Endothelial cell of umbilical vein (primary cell): ENCODE measurements at regions of chr17 and their contacts with region 1.

Region 1: DNA sequence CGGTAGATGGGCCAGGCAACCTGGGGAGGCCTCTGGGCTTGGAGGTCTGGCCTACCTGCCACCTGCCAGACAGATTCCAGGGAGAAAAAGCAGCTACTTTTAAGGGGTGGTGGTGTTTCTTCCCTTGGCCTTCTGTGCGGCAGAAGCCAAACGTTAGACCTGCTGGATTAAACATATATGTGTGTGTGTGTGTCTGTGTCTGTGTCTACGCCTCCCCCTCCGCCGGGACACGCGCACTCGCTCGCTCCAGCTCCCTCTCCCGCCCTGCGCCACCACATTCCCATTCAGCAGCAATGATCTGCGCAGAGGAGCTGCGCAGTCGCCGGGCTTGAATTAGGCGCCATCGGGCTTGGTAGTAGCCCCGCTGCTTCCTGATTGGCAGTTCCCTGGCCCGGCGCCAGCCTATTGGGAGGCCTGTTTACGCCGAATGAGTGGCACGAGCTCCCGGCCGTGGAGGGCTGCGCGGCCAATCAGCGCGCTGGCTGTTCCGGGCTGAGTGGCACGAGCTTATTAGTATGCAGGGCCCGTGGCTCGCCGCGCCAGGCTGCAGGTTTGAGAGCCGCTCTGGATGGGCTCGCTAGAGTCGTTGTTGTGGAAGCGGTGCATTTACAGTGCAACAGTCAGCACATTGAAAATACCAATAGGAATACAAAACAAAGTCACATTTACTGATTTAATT is at the start of gene BAHCC1:
- DNase-seq: peak; percentile 100
- H3K4me3 ChIP-seq: peak within 1 kb of the TSS; percentile 60 to 77 (median 76)
- H3K27ac ChIP-seq: peak within 1 kb of the TSS; percentile 85
- H3K4me1 ChIP-seq: peaks cover 33% of the 10 kb centered on the region
- H3K27me3 ChIP-seq: no peaks in the 10 kb centered on the region
- CTCF ChIP-seq: no peak
- POLR2A ChIP-seq: peak; percentile 97
- total RNA-seq, gene BAHCC1: 10.3 and 11.6 TPM in 2 replicates

Region 2: GRCh38 chr17:81294856-81295680 is 100.0 kb before region 1 on chr17 and contains the start of gene SLC38A10:
- CTCF ChIA-PET with region 1: interaction called, 7 read pairs
- POLR2A ChIA-PET with region 1: interaction called, 3 read pairs
- dilution Hi-C with region 1: no loop called
- intact Hi-C with region 1: loop called (anchors 1 kb)
- DNase-seq: peak; percentile 79
- H3K4me3 ChIP-seq: peak within 1 kb of the TSS; percentile 57 to 72 (median 63)
- H3K27ac ChIP-seq: peak within 1 kb of the TSS; percentile 86
- H3K4me1 ChIP-seq: peaks cover 14% of the 10 kb centered on the region
- H3K27me3 ChIP-seq: no peaks in the 10 kb centered on the region
- CTCF ChIP-seq: no peak
- POLR2A ChIP-seq: peak; percentile 91
- total RNA-seq, gene SLC38A10: 109 and 113 TPM in 2 replicates

Region 3: DNA sequence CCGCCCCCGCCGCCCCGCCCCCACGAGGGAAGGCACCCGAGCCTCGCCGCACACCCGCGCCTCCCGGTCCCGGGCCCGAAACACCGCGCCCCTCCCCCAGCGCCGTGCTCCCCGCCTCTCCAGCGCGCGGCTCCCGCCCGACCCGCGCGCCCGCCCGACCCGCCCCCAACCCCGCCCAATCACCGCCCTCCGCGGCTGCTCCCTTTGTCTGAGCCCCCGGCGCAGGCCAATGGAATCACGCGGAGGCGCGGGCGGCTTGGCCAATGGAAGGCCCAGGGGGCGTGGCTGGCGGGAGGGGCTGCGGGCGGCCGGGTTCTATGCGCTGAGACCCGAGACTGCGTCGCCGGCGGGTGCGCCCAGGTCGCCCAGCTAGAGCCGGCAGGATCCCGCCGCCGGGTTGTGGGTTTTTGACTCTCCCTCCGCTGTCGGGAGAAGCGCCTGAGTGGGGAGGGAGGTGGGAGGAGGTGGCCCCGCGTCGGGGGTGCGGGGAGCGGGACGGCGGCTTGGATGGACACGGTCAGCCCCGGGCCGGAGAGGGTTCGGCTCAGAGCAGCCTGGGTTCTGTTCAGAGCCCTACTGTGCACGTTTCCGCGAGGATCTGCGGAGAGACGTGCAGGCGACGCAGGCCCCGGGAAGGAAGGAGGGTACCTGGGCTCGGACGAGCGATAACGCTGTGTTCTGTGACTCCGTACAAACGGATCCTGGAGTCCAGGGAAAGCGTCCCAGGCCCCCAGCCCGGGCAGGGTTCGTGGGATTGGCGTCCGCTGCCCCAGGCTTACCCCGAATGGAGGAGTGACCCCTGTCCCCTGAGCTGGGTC is 48.8 kb before region 1 on chr17:
- CTCF ChIA-PET with region 1: interaction called, 4 read pairs
- POLR2A ChIA-PET with region 1: interaction called, 3 read pairs
- dilution Hi-C with region 1: no loop called
- intact Hi-C with region 1: loop called (anchors 1 kb)
- DNase-seq: peak; percentile 95
- H3K4me3 ChIP-seq: peak overlapping the region; percentile 28 to 89 (median 48)
- H3K27ac ChIP-seq: peak overlapping the region; percentile 62
- H3K4me1 ChIP-seq: peaks cover 19% of the 10 kb centered on the region
- H3K27me3 ChIP-seq: no peaks in the 10 kb centered on the region
- CTCF ChIP-seq: no peak
- POLR2A ChIP-seq: peak; percentile 68

Region 4: DNA sequence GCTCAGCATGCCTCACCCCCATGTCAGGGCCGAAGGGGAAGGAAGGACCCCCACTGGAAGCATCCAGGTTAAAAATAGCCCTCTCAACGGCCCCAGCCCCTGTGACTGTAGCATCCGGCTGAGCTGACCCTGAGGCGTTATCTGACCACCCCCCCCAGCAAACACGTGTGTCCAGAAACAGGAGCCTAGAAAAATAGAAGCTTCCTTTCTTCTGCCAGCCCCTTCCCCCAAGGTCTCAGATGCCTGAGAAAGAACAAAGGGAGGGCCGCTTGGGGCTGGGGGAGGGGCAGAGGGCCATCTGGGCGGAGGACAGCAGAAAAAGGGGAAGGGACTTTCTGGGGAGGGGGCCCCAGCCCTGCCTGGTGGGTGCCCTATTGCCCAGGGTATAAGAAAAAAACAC is 61.7 kb after region 1 on chr17:
- CTCF ChIA-PET with region 1: interaction called, 3 read pairs
- POLR2A ChIA-PET with region 1: interaction called, 3 read pairs
- dilution Hi-C with region 1: no loop called
- intact Hi-C with region 1: loop called (anchors 2 kb)
- DNase-seq: peak; percentile 80
- H3K4me3 ChIP-seq: no peak overlapping the region
- H3K27ac ChIP-seq: peak overlapping the region; percentile 39
- H3K4me1 ChIP-seq: peaks cover 19% of the 10 kb centered on the region
- H3K27me3 ChIP-seq: no peaks in the 10 kb centered on the region
- CTCF ChIP-seq: no peak
- POLR2A ChIP-seq: no peak

Region 5: DNA sequence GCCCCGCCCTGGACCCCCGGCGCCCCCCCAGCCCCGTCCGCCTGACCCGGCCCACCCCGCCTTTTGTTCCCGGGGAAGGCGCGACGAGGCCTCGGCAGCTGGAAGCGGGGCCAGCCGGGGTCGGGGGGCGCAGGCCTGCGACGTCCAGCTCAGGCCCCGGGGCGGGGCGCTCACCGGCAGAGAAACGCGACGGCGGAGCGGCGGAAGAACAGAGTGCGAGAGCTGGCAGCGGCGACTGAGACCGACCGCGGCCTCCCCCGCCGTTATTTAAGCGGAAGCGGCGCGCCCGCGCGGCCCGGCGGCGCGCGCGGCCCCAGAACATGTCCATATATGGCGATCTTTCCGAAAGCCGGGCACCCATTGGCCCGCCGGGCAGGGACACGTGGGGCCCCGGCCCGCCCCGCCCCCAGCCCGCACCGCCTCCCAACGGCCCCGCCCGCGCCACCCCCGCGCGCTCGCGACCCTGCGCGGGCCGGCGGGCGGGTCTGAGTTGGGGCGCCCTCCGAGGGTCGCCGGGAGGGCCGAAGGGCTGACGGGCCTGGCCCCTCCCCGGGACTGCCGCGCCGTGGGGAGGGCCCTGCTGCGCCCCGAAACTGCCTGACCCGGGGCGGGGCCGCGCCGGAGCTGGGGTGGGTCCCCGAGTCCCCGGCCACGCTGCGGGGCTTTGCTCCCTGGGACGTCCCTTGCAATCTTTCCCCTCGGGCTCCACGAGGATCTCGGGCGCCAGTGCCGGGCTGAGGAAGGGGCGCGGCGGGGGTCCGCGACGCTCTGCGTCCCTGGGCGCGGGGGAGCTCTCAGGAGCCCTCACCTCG is 117.7 kb after region 1 on chr17 and contains the start of gene ACTG1:
- CTCF ChIA-PET with region 1: interaction called, 3 read pairs
- POLR2A ChIA-PET with region 1: interaction called, 10 read pairs
- dilution Hi-C with region 1: no loop called
- intact Hi-C with region 1: loop called (anchors 1 kb)
- DNase-seq: peak; percentile 88
- H3K4me3 ChIP-seq: peak within 1 kb of the TSS; percentile 42 to 93 (median 78)
- H3K27ac ChIP-seq: peak within 1 kb of the TSS; percentile 60
- H3K4me1 ChIP-seq: peaks cover 36% of the 10 kb centered on the region
- H3K27me3 ChIP-seq: no peaks in the 10 kb centered on the region
- CTCF ChIP-seq: no peak
- POLR2A ChIP-seq: peak; percentile 99
- total RNA-seq, gene ACTG1: 6,127 and 6,180 TPM in 2 replicates